Posterior cingulate gyrus (tissue), 11 donors: ENCODE measurements at regions of chr6 and their contacts with region 1.

Region 1: GRCh38 chr6:163364641-163365040 is 49.9 kb upstream of the QKI start:
- DNase-seq: peak in 1 of 10 donors; percentile 52

Region 2: GRCh38 chr6:163192591-163192990 is 172.1 kb before region 1 on chr6:
- intact Hi-C with region 1: no loop called
- DNase-seq: no peak

Region 3: GRCh38 chr6:163398815-163399214 is 34.2 kb after region 1 on chr6:
- intact Hi-C with region 1: loop called (anchors 5 kb)
- DNase-seq: peak in 6 of 10 donors; percentile 39 to 88 (median 42)